ENCODE measurements at regions of chr12 and their contacts with region 1.

Region 1: DNA sequence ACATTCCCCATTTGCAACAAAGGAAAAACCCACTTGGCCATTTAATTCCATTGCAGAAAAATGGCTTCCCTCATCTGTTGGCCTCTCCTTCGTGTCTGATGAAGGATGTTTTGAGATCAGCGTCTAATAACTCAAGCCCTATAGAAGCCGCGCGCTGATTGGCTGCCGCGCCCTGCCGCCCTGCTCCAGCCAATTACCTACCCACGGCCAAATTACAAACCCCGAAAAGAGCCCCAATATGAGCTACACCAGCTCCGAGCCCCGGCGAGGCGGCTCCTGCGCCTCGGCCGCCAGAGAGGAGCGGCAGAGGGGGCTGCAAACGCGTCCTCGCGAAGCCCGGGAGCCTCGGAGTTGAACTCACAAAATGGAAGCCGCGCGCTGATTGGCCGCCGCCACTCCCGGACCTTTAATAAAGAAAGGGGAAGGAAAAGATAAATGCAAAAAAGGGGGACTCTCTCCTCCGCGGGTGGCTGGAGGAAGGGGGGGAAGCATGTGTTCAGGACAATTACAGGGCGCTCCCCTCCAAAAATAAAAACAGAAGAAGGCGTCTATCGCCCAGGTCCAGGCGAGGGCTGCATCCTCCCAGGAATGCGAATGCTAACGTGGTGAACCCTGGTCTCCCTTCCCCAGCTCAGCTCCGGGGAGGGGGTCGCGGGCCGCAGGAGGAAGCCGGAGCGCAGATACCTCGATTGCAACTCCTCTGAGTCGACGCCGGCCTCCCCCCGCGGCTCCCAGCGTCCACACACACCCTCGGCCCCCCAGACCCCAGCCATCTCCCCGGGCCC is 771 bp upstream of the SETD1B start:
- DNase-seq: peak; percentile 79 to 96 (median 90)
- ATAC-seq: peak; percentile 51 to 55
- H3K4me3 Mint-ChIP-seq: peak overlapping the region; percentile 90 to 100 (median 96)
- H3K27ac Mint-ChIP-seq: peak overlapping the region; percentile 99 to 100 (median 99)
- H3K4me1 Mint-ChIP-seq: peaks cover 34 to 43% (median 37%) of the 10 kb centered on the region in 4 donors
- H3K27me3 Mint-ChIP-seq: no peaks in the 10 kb centered on the region

Region 2: DNA sequence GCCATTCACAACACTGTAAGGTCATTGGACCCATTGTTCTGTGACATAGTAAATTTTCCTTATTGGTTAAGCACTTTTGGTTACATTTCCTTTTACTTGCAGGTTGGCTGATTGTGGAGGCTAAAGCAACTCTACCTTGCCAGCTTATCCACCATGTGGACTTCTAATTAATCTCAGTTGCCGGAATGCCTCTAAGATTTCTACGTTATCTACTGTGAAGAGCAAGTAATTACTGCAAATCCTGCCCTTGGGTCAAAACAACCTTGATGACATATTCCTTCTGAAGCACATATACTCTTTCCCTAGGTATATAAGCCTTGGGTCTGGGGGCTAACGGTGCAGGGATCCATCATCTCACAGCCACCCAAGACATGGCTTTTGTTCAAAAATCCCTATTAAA is 114.1 kb before region 1 on chr12:
- POLR2A ChIA-PET with region 1: interaction called, 17 read pairs
- DNase-seq: no peak
- ATAC-seq: no peak
- H3K4me3 Mint-ChIP-seq: peak overlapping the region in 1 of 10 donors; percentile 7
- H3K27ac Mint-ChIP-seq: peak overlapping the region in 6 of 10 donors; percentile 27 to 68 (median 48)
- H3K4me1 Mint-ChIP-seq: peaks cover 4 to 13% (median 11%) of the 10 kb centered on the region in 4 donors
- H3K27me3 Mint-ChIP-seq: no peaks in the 10 kb centered on the region

Region 3: DNA sequence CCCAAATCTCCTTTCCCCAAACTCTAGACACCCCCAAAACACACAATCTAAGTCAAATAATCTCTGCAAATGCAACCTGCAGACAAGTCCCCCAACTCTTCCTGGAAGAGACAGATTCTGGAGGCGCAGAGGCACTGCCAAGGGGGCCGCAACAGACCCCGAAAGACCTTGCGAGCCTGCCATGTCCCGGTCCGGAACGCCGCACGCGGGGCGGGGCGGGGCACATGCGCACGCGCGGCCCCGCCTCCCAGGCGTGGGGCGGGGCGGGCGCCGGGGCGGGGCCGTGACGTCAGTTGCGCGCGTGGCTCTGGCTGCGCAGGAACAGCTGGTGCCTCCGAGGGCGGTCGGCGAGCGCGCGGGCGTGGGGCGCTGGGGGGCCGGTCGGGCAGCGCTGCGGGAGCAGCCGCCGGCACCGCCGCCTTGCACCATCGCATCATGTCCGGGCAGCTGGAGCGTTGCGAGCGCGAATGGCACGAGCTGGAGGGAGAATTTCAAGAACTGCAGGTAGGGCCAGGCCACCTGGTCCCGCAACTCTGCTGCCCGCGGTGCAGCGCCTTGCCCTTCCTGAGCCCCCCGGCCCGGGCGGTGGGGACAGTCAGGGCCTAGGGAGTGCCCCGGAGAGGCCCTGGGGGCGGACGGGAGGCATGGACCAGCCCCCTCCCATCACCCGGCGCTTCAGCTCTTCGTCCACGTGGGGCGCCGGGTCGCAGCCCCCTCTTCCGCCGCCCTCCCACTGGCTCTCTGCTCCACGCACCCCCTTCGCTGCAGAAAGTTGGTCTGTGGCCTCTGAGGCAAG is 90.4 kb before region 1 on chr12 and contains the start of gene TMEM120B:
- POLR2A ChIA-PET with region 1: interaction called, 35 read pairs
- DNase-seq: peak; percentile 73 to 92 (median 84)
- ATAC-seq: peak; percentile 82 to 85
- H3K4me3 Mint-ChIP-seq: peak within 1 kb of the TSS; percentile 84 to 98 (median 94)
- H3K27ac Mint-ChIP-seq: peak within 1 kb of the TSS; percentile 82 to 98 (median 94)
- H3K4me1 Mint-ChIP-seq: peaks cover 8 to 49% (median 34%) of the 10 kb centered on the region in 4 donors
- H3K27me3 Mint-ChIP-seq: no peaks in the 10 kb centered on the region
- polyA plus RNA-seq, gene TMEM120B: 2.1 to 2.5 (median 2.4) TPM

Region 4: DNA sequence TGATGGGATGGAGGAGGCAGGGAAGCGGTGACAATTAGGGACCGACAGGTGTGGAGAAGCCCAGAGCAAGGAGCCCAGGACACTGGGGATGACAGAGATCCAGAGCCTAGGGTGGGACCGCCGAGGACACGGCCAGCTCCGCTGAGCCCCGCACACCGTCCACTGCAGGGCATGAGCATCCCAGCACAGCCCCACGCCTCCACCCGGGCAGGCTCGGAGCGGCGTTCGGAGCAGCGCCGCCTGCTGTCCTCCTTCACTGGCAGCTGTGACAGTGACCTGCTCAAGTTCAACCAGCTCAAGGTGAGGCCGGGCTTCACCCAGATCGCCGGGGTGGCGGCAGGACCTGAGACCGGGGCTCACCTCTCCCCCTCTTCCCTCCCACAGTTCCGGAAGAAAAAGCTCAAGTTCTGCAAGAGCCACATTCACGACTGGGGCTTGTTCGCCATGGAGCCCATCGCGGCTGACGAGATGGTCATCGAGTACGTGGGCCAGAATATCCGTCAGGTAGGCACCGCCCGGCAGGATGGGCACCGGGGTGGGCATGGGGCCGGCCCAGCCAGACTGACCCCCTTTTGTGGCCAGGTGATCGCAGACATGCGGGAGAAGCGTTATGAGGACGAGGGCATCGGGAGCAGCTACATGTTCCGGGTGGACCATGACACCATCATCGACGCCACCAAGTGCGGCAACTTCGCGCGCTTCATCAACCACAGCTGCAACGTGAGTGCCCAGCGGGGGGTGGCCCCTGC is 24.5 kb after region 1 on chr12:
- POLR2A ChIA-PET with region 1: interaction called, 2,517 read pairs
- DNase-seq: no peak
- ATAC-seq: no peak
- H3K4me3 Mint-ChIP-seq: no peak overlapping the region
- H3K27ac Mint-ChIP-seq: peak overlapping the region in 4 of 10 donors; percentile 34 to 87 (median 70)
- H3K4me1 Mint-ChIP-seq: peaks cover 0 to 22% (median 17%) of the 10 kb centered on the region in 4 donors
- H3K27me3 Mint-ChIP-seq: no peaks in the 10 kb centered on the region

Region 5: DNA sequence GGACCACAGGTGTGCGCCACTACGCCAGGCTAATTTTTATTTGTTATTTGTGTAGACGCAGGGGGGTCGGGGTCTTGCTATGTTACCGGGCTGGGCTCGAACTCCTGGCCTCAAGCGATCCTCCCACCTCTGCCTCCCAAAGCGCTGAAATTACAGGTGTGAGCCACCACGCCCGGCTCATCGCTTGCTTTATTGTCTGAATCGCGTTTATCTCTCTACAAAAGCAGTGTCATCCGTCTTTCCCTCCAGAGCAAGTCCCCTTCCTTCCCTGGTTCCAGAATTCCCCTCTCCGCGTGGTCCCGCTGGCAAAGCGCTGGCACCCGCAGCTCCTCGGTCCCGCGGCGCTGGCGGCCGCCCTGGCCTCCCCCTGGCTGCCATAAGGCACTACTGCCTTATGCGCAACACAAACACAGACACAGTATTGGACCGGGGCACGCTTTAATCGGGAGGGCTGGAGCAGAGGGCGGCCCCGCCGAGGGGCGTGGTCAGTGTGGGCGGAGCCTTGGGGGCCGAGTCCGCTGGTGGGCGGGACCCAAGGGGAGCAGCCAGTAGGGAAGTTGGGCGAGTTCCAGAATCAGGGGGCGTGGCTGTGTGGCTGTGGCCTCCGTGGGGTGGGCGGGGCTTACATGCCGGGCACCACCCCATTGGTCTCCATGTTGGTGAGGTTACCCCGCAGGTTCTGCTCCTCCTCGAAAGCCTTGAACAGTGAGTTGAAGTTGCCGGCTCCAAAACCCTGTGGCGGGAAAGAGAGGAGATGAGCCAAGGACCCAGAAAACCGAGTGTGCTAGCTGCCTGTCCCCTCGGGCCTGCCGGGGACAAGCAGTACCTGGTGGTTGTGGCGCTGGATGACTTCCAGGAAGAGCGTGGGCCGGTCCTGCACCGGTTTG is 36.3 kb after region 1 on chr12:
- POLR2A ChIA-PET with region 1: interaction called, 13 read pairs
- DNase-seq: peak; percentile 98 to 100 (median 100)
- ATAC-seq: peak; percentile 96
- H3K4me3 Mint-ChIP-seq: peak overlapping the region; percentile 96 to 100 (median 97)
- H3K27ac Mint-ChIP-seq: peak overlapping the region; percentile 85 to 96 (median 94)
- H3K4me1 Mint-ChIP-seq: peaks cover 5 to 23% (median 19%) of the 10 kb centered on the region in 4 donors
- H3K27me3 Mint-ChIP-seq: no peaks in the 10 kb centered on the region

Region 6: DNA sequence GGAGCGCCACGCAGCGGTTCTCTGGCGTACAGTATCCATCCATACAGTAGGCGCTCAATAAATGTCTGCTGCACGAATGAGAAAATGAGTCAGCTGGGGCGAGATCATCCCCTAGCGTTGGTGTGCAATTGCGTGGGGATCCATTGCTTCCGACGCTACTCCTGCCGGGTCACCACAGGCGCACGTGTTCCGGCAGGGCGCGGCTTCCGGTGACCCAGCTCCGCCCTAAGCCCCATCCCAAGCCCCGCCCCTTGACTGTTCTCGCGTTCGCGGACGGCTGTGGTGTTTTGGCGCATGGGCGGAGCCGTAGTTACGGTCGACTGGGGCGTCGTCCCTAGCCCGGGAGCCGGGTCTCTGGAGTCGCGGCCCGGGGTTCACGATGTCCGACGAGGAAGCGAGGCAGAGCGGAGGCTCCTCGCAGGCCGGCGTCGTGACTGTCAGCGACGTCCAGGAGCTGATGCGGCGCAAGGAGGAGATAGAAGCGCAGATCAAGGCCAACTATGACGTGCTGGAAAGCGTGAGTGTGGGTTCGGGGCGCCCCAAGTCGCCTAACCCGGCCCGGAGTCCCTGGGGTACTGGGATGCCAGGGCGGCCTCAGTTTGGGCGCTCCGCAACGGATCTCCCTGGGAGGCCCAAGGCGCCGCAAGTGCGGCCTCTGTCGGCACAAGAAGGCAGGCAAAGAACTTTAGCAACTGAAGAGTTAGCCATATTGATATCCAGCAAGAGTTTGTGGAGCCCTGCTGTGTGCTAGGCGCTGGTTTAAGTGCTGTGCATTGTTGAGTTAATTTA is 85.6 kb after region 1 on chr12 and contains the start of gene PSMD9:
- POLR2A ChIA-PET with region 1: interaction called, 49 read pairs
- DNase-seq: peak; percentile 95 to 99 (median 98)
- ATAC-seq: peak; percentile 93
- H3K4me3 Mint-ChIP-seq: peak within 1 kb of the TSS; percentile 96 to 100 (median 98)
- H3K27ac Mint-ChIP-seq: peak within 1 kb of the TSS; percentile 94 to 100 (median 99)
- H3K4me1 Mint-ChIP-seq: peaks cover 14 to 43% (median 35%) of the 10 kb centered on the region in 4 donors
- H3K27me3 Mint-ChIP-seq: peaks cover 0 to 3% (median 0%) of the 10 kb centered on the region in 5 donors
- polyA plus RNA-seq, gene PSMD9: 88.4 to 90.5 (median 89.4) TPM

Region 7: DNA sequence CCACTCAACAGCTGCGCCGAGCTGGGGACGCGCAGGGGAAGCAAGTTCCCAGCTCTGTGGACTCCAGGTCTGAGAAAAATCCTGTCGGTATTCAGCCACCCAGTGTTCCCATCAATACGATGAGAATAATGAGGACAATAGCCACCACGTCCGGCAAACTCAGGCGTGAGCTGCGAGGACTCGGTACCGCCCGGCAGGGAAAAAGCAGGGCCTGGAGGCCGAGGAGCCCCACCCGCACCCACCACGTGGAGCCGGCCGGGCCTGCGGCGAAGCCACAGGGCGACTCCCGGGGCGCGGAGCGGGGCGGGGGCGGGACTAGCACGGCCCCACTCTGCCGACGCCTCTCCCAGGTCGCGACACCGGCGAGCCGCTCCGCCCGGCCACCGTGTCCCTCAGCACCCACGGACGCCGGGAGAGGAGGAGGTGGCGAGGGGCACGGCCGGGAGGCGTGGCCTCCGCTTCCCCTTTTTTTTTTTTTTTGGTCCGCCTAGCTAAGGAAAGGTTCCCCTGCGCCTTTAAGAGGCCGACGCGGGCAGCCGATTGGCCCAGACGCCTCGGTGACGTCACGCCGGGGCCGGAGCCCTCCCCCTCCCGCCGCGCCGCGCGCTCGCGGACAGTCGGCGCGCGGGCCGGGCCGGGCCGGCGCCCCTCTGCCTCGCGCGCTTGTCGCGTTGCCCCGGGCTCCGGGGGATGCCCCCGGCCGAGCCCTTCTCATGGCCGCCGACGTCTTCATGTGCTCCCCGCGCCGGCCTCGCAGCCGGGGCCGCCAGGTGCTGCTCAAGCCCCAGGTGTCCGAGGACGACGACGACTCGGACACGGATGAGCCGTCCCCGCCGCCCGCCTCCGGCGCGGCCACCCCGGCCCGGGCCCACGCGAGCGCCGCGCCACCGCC is 275.3 kb after region 1 on chr12 and contains the start of gene MLXIP:
- POLR2A ChIA-PET with region 1: interaction called, 11 read pairs
- DNase-seq: peak; percentile 79 to 91 (median 86)
- ATAC-seq: peak; percentile 71 to 76
- H3K4me3 Mint-ChIP-seq: peak within 1 kb of the TSS in 9 of 10 donors; percentile 91 to 99 (median 98)
- H3K27ac Mint-ChIP-seq: peak within 1 kb of the TSS; percentile 25 to 97 (median 92)
- H3K4me1 Mint-ChIP-seq: peaks cover 27 to 49% (median 34%) of the 10 kb centered on the region in 4 donors
- H3K27me3 Mint-ChIP-seq: no peaks in the 10 kb centered on the region
- polyA plus RNA-seq, gene MLXIP: 17.3 to 43.3 (median 20.0) TPM

Measured in naive thymus-derived CD8-positive, alpha-beta T cell (primary cell).